Gastrocnemius medialis (tissue), 4 donors: ENCODE measurements at regions of chr9 and their contacts with region 1.

Region 1: GRCh38 chr9:137618105-137619067 is at the start of gene EHMT1:
- DNase-seq: peak; percentile 66 to 82
- ATAC-seq: peak; percentile 88 to 91
- H3K4me3 ChIP-seq: peak within 1 kb of the TSS; percentile 77 to 100 (median 96)
- H3K27ac ChIP-seq: peak within 1 kb of the TSS; percentile 90 to 99 (median 92)
- H3K4me1 ChIP-seq: peaks cover 39 to 41% of the 10 kb centered on the region in 2 donors
- H3K27me3 ChIP-seq: no peaks in the 10 kb centered on the region
- CTCF ChIP-seq: peak in 2 of 5 experiments; percentile 12 to 17
- POLR2A ChIP-seq: peak; percentile 72 to 74
- total RNA-seq, gene EHMT1: 38.6 to 77.8 (median 54.3) TPM

Region 2: GRCh38 chr9:137590462-137591383 is 27.7 kb before region 1 on chr9 and contains the start of gene ZMYND19:
- in situ Hi-C with region 1: no loop called
- intact Hi-C with region 1: loop called (anchors 2 kb)
- DNase-seq: peak; percentile 79 to 86
- ATAC-seq: peak; percentile 92 to 95
- H3K4me3 ChIP-seq: peak within 1 kb of the TSS; percentile 67 to 99 (median 81)
- H3K27ac ChIP-seq: peak within 1 kb of the TSS; percentile 29 to 64 (median 59)
- H3K4me1 ChIP-seq: peaks cover 7 to 12% of the 10 kb centered on the region in 2 donors
- H3K27me3 ChIP-seq: no peaks in the 10 kb centered on the region
- CTCF ChIP-seq: no peak
- POLR2A ChIP-seq: no peak
- total RNA-seq, gene ZMYND19: 5.8 to 15.2 (median 11.8) TPM